GM12878 (cell line): ENCODE measurements at regions of chr7 and their contacts with region 1.

Region 1: GRCh38 chr7:37732253-37732652 is 48.7 kb downstream of the GPR141 start:
- DNase-seq: peak; percentile 56
- ATAC-seq: peak; percentile 89
- H3K4me3 ChIP-seq: no peak overlapping the region
- H3K27ac ChIP-seq: no peak overlapping the region
- H3K4me1 ChIP-seq: peaks cover 4% of the 10 kb centered on the region
- H3K27me3 ChIP-seq: no peaks in the 10 kb centered on the region
- CTCF ChIP-seq: peak; percentile 73 to 79 (median 77)
- EP300 ChIP-seq: no peak
- POLR2A ChIP-seq: no peak
- RAD21 ChIP-seq: peak; percentile 90

Region 2: GRCh38 chr7:37352974-37353948 is 379.0 kb before region 1 on chr7:
- CTCF ChIA-PET with region 1: interaction called, 4 read pairs
- POLR2A ChIA-PET with region 1: no interaction called
- RAD21 ChIA-PET with region 1: interaction called, 5 read pairs
- SMC1A ChIA-PET with region 1: interaction called, 7 read pairs
- in situ Hi-C with region 1: no loop called
- intact Hi-C with region 1: loop called (anchors 10 kb)
- DNase-seq: no peak
- ATAC-seq: peak; percentile 89
- H3K4me3 ChIP-seq: peak overlapping the region; percentile 72
- H3K27ac ChIP-seq: peak overlapping the region; percentile 52; the same call in 1 of the 2 replicates
- H3K4me1 ChIP-seq: peaks cover 17% of the 10 kb centered on the region
- H3K27me3 ChIP-seq: no peaks in the 10 kb centered on the region
- CTCF ChIP-seq: peak; percentile 94 to 98 (median 97)
- EP300 ChIP-seq: no peak
- POLR2A ChIP-seq: no peak
- RAD21 ChIP-seq: peak; percentile 97

Region 3: DNA sequence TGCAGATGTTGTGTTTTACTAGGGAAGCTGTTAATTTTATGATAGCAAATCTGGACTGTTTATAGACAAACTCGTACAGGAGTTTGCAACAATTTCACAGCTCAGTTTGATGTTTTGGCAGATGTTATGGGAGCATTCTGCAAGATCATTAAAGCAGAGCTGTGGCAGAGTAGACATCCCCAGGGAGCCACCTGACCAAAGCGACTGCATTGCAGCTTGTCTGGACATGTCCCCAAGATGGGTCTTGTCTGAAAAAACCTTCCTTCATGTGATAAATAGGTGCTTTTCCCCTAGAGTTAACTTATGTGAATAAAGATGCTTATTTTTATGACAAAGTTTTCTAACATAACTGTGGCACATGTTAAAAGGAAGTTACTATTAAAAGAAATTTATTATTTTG is 139.9 kb before region 1 on chr7:
- CTCF ChIA-PET with region 1: no interaction called
- POLR2A ChIA-PET with region 1: no interaction called
- RAD21 ChIA-PET with region 1: no interaction called
- SMC1A ChIA-PET with region 1: no interaction called
- in situ Hi-C with region 1: no loop called
- intact Hi-C with region 1: no loop called
- DNase-seq: peak; percentile 4
- ATAC-seq: no peak
- H3K4me3 ChIP-seq: no peak overlapping the region
- H3K27ac ChIP-seq: no peak overlapping the region
- H3K4me1 ChIP-seq: no peaks in the 10 kb centered on the region
- H3K27me3 ChIP-seq: no peaks in the 10 kb centered on the region
- CTCF ChIP-seq: no peak
- EP300 ChIP-seq: no peak
- POLR2A ChIP-seq: no peak
- RAD21 ChIP-seq: no peak

Region 4: DNA sequence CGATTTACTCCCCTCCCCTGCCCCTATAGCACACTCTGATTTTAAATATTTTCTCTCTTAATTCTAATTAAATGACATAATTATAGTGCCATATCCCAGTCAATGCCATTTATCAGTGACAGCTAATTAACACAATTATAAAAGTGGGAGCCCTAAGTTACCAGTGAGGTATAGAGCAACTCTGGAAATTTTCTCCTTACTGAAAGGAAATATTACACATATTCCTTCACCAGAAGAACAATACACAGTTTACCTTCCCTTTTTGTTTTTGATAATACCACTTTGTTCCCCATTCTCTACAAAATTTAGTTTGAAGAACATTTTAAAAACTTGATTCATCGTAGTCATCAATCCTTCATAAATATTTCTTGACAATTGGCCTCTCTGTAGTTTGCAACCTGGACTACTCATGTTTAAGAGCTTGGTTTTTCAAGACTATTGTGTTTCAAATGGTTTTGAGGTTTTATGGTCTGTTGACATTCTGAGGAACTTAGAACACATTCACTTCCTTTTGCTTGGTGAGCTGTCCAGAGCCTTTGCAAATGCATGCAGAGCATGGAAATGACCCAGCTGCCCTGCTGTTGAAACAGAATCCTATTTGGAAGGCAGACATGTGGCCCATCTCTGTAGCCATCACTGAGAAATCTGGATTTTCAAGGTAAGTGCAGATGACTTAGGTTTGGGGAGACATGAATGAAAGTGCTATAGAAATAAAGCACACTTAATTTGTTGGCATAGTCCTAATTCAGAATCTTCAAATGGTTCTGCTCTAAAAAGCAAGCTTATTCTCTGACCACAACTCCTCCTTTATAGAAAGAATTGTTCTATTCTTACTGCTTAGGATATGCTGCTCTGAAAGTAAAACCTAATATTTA is 48.8 kb before region 1 on chr7 and contains the start of gene GPR141:
- CTCF ChIA-PET with region 1: interaction called, 8 read pairs
- POLR2A ChIA-PET with region 1: interaction called, 4 read pairs
- RAD21 ChIA-PET with region 1: interaction called, 10 read pairs
- SMC1A ChIA-PET with region 1: interaction called, 19 read pairs
- in situ Hi-C with region 1: no loop called
- intact Hi-C with region 1: no loop called
- DNase-seq: peak; percentile 93
- ATAC-seq: peak; percentile 97
- H3K4me3 ChIP-seq: 0 out of 2 replicates have a peak within 1 kb of the TSS, but pooled peaks have one; percentile 44
- H3K27ac ChIP-seq: peak within 1 kb of the TSS; percentile 48
- H3K4me1 ChIP-seq: peaks cover 25% of the 10 kb centered on the region
- H3K27me3 ChIP-seq: no peaks in the 10 kb centered on the region
- CTCF ChIP-seq: no peak
- EP300 ChIP-seq: peak; percentile 62 to 74; a peak in 3 of 4 replicates
- POLR2A ChIP-seq: no peak
- RAD21 ChIP-seq: peak; percentile 7; the same call in 1 of the 2 replicates
- polyA plus RNA-seq, gene GPR141: 0.97 to 1.2 TPM

Region 5: DNA sequence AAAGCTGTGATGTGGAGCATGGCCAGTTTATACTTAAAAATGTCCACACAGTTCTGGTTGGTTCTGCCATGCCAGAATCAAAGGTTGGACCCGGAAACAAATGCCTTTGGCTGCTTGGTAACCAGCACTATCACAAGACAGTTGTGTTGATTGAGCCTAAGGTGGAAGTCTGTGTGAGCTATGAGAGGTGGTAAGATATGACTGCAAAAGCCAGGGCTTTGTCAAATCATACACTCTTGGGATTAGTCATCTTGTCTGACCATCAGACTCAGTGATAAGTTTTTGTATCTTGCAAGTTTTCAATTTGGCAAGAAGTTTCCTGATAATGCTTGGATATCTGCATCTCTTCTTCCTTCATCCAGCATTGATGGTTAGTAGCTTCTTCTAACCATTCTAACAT is 13.2 kb before region 1 on chr7:
- CTCF ChIA-PET with region 1: interaction called, 22 read pairs
- POLR2A ChIA-PET with region 1: interaction called, 4 read pairs
- RAD21 ChIA-PET with region 1: interaction called, 8 read pairs
- SMC1A ChIA-PET with region 1: interaction called, 9 read pairs
- in situ Hi-C with region 1: no loop called
- intact Hi-C with region 1: no loop called
- DNase-seq: no peak
- ATAC-seq: peak; percentile 95
- H3K4me3 ChIP-seq: no peak overlapping the region
- H3K27ac ChIP-seq: no peak overlapping the region
- H3K4me1 ChIP-seq: peaks cover 8% of the 10 kb centered on the region
- H3K27me3 ChIP-seq: no peaks in the 10 kb centered on the region
- CTCF ChIP-seq: no peak
- EP300 ChIP-seq: peak; percentile 21 to 59; a peak in 1 of 4 replicates
- POLR2A ChIP-seq: no peak
- RAD21 ChIP-seq: no peak

Region 6: DNA sequence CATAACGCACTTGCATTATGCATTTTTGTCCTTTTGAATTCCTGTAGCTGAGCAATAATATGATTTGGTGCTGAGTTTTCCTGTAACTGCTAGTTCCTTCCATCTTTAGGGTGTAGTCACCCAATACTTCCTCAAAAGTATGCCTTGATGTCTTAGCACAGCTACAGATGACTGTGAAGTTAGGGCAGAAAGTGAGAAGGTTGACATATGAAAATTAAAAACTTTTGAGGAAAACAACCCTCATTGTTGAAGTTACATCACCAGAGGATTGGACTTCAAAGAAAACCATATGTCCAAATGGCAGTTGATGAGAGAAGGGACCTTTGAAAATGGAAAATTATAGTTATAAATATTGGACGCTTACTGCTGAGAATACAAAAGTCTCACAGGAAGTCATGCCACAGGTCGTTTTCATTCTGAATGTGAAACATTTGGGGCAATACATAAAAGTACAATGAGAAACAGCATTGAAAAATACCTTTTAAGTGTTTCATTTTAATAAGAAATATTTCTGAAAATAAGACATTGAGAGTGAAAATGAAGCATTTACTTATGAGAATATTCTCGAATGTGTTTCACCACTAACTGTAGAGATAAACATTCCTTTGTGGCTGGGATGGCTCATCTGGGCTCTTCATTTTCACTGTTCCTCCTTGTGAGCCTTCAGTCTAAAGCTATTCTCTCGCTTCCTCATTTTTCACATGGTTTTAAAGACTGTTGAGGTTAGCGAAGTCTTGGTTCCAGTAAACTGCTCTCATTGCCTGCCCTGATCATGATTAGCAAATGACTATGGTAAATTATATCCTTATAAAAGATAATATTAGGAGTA is 54.7 kb after region 1 on chr7:
- CTCF ChIA-PET with region 1: interaction called, 11 read pairs
- POLR2A ChIA-PET with region 1: no interaction called
- RAD21 ChIA-PET with region 1: interaction called, 4 read pairs
- SMC1A ChIA-PET with region 1: interaction called, 13 read pairs
- in situ Hi-C with region 1: no loop called
- intact Hi-C with region 1: no loop called
- DNase-seq: peak; percentile 91
- ATAC-seq: peak; percentile 92
- H3K4me3 ChIP-seq: peak overlapping the region; percentile 25; the same call in 1 of the 2 replicates
- H3K27ac ChIP-seq: peak overlapping the region; percentile 86
- H3K4me1 ChIP-seq: peaks cover 50% of the 10 kb centered on the region
- H3K27me3 ChIP-seq: no peaks in the 10 kb centered on the region
- CTCF ChIP-seq: no peak
- EP300 ChIP-seq: peak; percentile 83 to 89; a peak in 3 of 4 replicates
- POLR2A ChIP-seq: no peak
- RAD21 ChIP-seq: no peak

Region 7: DNA sequence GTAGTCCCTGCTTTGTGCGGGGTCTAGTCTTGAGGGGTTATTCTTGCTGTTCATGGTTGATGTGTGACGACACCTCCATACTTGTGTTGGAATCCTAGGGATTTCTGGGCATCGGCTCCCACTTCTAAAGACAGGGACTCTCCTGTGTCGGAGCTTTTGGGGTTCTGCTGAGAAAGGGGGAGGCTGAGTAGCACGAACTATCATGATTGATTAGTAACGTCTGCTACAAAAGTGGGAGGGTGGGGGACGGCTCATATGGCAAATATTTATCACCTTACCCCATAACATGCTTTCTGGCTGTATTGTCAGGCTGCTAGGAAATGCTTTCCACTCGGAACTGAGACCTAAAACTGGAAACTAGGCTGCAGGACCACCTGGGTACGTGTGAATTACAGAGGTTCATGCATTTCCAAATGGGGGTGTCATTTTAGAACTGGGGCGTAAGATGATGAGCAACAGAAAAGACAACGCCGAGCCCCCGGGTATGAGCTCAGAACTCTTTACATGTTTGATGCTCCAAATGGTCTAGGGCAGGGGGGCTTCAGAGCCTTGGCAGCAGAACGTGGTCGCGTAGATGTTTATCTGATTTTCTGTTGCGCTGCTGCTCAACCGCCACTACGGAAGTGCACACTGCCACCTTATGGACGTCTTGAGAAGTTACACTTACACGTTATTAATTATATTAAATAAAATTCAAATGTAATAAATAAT is 101.0 kb after region 1 on chr7:
- CTCF ChIA-PET with region 1: interaction called, 87 read pairs
- POLR2A ChIA-PET with region 1: interaction called, 4 read pairs
- RAD21 ChIA-PET with region 1: interaction called, 21 read pairs
- SMC1A ChIA-PET with region 1: interaction called, 45 read pairs
- in situ Hi-C with region 1: loop called (anchors 5 kb)
- intact Hi-C with region 1: loop called (anchors 2 kb)
- DNase-seq: no peak
- ATAC-seq: peak; percentile 76
- H3K4me3 ChIP-seq: peak overlapping the region; percentile 57; the same call in 1 of the 2 replicates
- H3K27ac ChIP-seq: peak overlapping the region; percentile 26; the same call in 1 of the 2 replicates
- H3K4me1 ChIP-seq: peaks cover 4% of the 10 kb centered on the region; the same call in 1 of the 2 replicates
- H3K27me3 ChIP-seq: no peaks in the 10 kb centered on the region
- CTCF ChIP-seq: peak; percentile 59 to 67 (median 62); a peak in 5 of 6 replicates
- EP300 ChIP-seq: no peak
- POLR2A ChIP-seq: no peak
- RAD21 ChIP-seq: peak; percentile 93